CD8-positive, alpha-beta T cell (primary cell): ENCODE measurements at regions of chr9 and their contacts with region 1.

Region 1: GRCh38 chr9:84397151-84397728 is 56.7 kb upstream of the SLC28A3 start:
- DNase-seq: peak; percentile 28 to 72 (median 61)
- ATAC-seq: peak; percentile 56
- H3K4me3 ChIP-seq: no peak overlapping the region
- H3K4me3 Mint-ChIP-seq: no peak overlapping the region
- H3K27ac ChIP-seq: no peak overlapping the region
- H3K27ac Mint-ChIP-seq: no peak overlapping the region
- H3K4me1 ChIP-seq: no peaks in the 10 kb centered on the region
- H3K4me1 Mint-ChIP-seq: no peaks in the 10 kb centered on the region
- H3K27me3 ChIP-seq: no peaks in the 10 kb centered on the region
- H3K27me3 Mint-ChIP-seq: peaks cover 2% of the 10 kb centered on the region
- CTCF ChIP-seq: peak; percentile 79

Region 2: DNA sequence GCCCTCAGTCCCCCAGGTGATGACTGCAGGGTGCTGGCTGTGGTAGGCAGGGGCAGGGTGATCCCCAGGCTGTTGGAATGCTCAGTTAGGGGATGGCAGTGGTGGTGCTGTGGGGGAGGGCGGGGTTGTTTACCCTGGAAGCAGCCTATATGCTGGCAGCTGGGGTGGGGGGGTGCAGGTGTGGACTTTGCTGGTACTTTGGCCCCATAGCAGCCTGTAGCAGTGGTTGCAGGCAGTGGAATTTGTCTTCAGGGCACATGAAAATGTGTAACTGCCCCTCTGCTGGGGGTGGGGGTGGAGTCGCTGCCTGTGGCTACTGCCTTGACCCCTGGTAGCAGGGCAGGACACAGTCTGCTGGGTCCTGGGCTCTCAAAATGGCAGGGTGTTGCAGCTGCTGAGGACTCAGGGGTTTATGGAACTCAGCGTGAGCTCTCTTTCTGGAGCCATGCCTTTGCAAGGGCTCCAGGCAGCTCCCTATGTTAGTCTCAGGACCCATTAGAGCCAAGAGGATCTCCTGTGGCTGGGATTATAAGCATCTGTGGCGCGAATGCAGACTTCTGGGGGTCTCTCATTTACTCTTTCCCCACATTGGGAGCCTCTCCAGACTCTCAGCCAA is 351.6 kb before region 1 on chr9:
- CTCF ChIA-PET with region 1: no interaction called
- POLR2A ChIA-PET with region 1: no interaction called
- intact Hi-C with region 1: no loop called
- DNase-seq: no peak
- ATAC-seq: no peak
- H3K4me3 ChIP-seq: no peak overlapping the region
- H3K4me3 Mint-ChIP-seq: no peak overlapping the region
- H3K27ac ChIP-seq: no peak overlapping the region
- H3K27ac Mint-ChIP-seq: no peak overlapping the region
- H3K4me1 ChIP-seq: no peaks in the 10 kb centered on the region
- H3K4me1 Mint-ChIP-seq: no peaks in the 10 kb centered on the region
- H3K27me3 ChIP-seq: no peaks in the 10 kb centered on the region
- H3K27me3 Mint-ChIP-seq: peaks cover 20% of the 10 kb centered on the region
- CTCF ChIP-seq: no peak

Region 3: DNA sequence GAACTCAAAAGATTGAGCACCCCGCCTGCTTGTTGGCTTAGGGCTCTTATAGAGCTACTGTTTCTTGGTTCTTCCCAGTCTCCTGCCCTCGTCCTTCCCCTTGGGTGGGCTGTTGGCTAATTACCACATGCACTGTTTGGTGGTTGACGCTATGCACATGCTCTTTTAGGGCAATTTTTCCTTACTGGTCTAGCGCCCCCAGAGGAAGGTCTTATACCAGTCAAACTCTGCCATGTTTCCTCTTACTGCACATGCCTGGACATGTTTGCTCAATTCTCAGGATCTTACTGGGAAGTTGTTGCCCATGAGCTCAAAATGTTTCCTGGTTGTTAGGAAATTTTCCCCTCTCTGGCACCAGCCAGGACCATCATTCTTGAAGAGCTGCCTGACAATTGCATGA is 158.6 kb before region 1 on chr9:
- CTCF ChIA-PET with region 1: no interaction called
- POLR2A ChIA-PET with region 1: no interaction called
- intact Hi-C with region 1: no loop called
- DNase-seq: no peak
- ATAC-seq: no peak
- H3K4me3 ChIP-seq: no peak overlapping the region
- H3K4me3 Mint-ChIP-seq: no peak overlapping the region
- H3K27ac ChIP-seq: no peak overlapping the region
- H3K27ac Mint-ChIP-seq: no peak overlapping the region
- H3K4me1 ChIP-seq: no peaks in the 10 kb centered on the region
- H3K4me1 Mint-ChIP-seq: no peaks in the 10 kb centered on the region
- H3K27me3 ChIP-seq: no peaks in the 10 kb centered on the region
- H3K27me3 Mint-ChIP-seq: peaks cover 7% of the 10 kb centered on the region
- CTCF ChIP-seq: no peak

Region 4: GRCh38 chr9:84411683-84412267 is 14.5 kb after region 1 on chr9:
- CTCF ChIA-PET with region 1: interaction called, 13 read pairs
- POLR2A ChIA-PET with region 1: no interaction called
- intact Hi-C with region 1: no loop called
- DNase-seq: no peak
- ATAC-seq: no peak
- H3K4me3 ChIP-seq: no peak overlapping the region
- H3K4me3 Mint-ChIP-seq: no peak overlapping the region
- H3K27ac ChIP-seq: no peak overlapping the region
- H3K27ac Mint-ChIP-seq: no peak overlapping the region
- H3K4me1 ChIP-seq: no peaks in the 10 kb centered on the region
- H3K4me1 Mint-ChIP-seq: no peaks in the 10 kb centered on the region
- H3K27me3 ChIP-seq: no peaks in the 10 kb centered on the region
- H3K27me3 Mint-ChIP-seq: no peaks in the 10 kb centered on the region
- CTCF ChIP-seq: no peak

Region 5: DNA sequence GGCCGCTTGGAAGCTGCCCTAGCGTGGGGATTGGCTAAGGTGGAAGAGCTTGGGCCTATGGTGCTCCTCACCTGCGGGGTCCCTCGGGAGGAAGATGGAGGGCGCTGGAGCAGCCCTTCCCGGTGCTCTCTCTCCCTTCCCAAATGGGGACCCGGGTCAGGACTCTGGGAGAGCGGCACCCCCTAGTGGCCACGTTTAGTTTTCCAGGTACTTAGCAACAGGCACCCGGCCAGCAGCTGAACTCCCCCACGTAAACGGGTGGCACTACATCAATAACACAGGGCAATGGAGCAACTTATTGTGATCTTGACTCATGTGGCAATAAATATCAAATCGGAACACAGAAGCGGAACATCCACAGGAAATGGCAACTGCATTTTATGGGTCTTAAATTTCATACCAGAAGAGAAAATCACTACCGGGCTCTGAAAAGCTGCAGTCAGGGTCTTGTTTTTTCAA is 1027.9 kb after region 1 on chr9:
- CTCF ChIA-PET with region 1: no interaction called
- POLR2A ChIA-PET with region 1: no interaction called
- intact Hi-C with region 1: loop called in 1 of 2 experiments (anchors 10 kb)
- DNase-seq: peak in 5 of 9 experiments; percentile 11 to 51 (median 35)
- ATAC-seq: no peak
- H3K4me3 ChIP-seq: no peak overlapping the region
- H3K4me3 Mint-ChIP-seq: no peak overlapping the region
- H3K27ac ChIP-seq: no peak overlapping the region
- H3K27ac Mint-ChIP-seq: no peak overlapping the region
- H3K4me1 ChIP-seq: no peaks in the 10 kb centered on the region
- H3K4me1 Mint-ChIP-seq: peaks cover 4% of the 10 kb centered on the region
- H3K27me3 ChIP-seq: no peaks in the 10 kb centered on the region
- H3K27me3 Mint-ChIP-seq: peaks cover 27% of the 10 kb centered on the region
- CTCF ChIP-seq: no peak